Activated naive CD4-positive, alpha-beta T cell treated with anti-CD3 and anti-CD28 coated beads, Interleukin-2, amount 10 ng/mL, durations not matched to agents 7 days and 5 days (primary cell): ENCODE measurements at regions of chr1 and their contacts with region 1.

Region 1: GRCh38 chr1:9145021-9145668 is 16.2 kb upstream of the GPR157 start:
- DNase-seq: no peak
- H3K4me3 Mint-ChIP-seq: no peak overlapping the region
- H3K27ac Mint-ChIP-seq: no peak overlapping the region
- H3K4me1 Mint-ChIP-seq: peaks cover 7% of the 10 kb centered on the region
- H3K27me3 Mint-ChIP-seq: peaks cover 12% of the 10 kb centered on the region

Region 2: GRCh38 chr1:9128520-9129265 is 16.5 kb before region 1 on chr1 and contains the start of gene GPR157:
- CTCF ChIA-PET with region 1: interaction called, 10 read pairs
- DNase-seq: peak; percentile 88
- H3K4me3 Mint-ChIP-seq: peak within 1 kb of the TSS; percentile 83
- H3K27ac Mint-ChIP-seq: peak within 1 kb of the TSS; percentile 68
- H3K4me1 Mint-ChIP-seq: peaks cover 36% of the 10 kb centered on the region
- H3K27me3 Mint-ChIP-seq: peaks cover 49% of the 10 kb centered on the region

Region 3: GRCh38 chr1:9166289-9167235 is 21.4 kb after region 1 on chr1:
- CTCF ChIA-PET with region 1: interaction called, 11 read pairs
- DNase-seq: no peak
- H3K4me3 Mint-ChIP-seq: no peak overlapping the region
- H3K27ac Mint-ChIP-seq: no peak overlapping the region
- H3K4me1 Mint-ChIP-seq: peaks cover 4% of the 10 kb centered on the region
- H3K27me3 Mint-ChIP-seq: no peaks in the 10 kb centered on the region

Region 4: GRCh38 chr1:9244501-9245229 is 99.5 kb after region 1 on chr1:
- CTCF ChIA-PET with region 1: interaction called, 12 read pairs
- DNase-seq: peak; percentile 39
- H3K4me3 Mint-ChIP-seq: no peak overlapping the region
- H3K27ac Mint-ChIP-seq: peak overlapping the region; percentile 76
- H3K4me1 Mint-ChIP-seq: peaks cover 42% of the 10 kb centered on the region
- H3K27me3 Mint-ChIP-seq: peaks cover 5% of the 10 kb centered on the region